Colonic mucosa (tissue), 4 donors: ENCODE measurements at regions of chr2 and their contacts with region 1.

Region 1: DNA sequence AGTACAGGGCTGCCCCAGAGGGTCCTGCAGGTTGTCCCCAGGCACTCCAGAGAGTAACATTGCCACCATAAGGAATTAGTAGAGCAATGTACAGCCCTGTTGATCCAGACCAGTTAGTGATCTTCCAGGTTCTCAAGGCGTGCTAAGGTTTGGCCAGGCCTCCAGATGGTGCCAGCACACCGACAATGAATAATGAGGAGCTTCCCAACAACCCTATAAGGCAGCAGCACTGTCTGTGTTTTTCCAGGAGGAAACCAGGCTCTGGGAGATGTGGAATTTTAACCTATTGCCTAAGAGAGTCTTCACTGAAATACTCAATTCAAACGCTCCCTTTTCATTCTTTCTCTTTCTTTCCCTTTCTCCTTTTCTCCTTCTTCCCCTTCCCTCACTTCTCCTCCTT is 122.1 kb downstream of the MGAT5 start:
- DNase-seq: peak; percentile 43
- H3K4me3 ChIP-seq: no peak overlapping the region
- H3K27ac ChIP-seq: no peak overlapping the region
- H3K4me1 ChIP-seq: peaks cover 5% of the 10 kb centered on the region
- H3K27me3 ChIP-seq: no peaks in the 10 kb centered on the region
- CTCF ChIP-seq: peak; percentile 46

Region 2: DNA sequence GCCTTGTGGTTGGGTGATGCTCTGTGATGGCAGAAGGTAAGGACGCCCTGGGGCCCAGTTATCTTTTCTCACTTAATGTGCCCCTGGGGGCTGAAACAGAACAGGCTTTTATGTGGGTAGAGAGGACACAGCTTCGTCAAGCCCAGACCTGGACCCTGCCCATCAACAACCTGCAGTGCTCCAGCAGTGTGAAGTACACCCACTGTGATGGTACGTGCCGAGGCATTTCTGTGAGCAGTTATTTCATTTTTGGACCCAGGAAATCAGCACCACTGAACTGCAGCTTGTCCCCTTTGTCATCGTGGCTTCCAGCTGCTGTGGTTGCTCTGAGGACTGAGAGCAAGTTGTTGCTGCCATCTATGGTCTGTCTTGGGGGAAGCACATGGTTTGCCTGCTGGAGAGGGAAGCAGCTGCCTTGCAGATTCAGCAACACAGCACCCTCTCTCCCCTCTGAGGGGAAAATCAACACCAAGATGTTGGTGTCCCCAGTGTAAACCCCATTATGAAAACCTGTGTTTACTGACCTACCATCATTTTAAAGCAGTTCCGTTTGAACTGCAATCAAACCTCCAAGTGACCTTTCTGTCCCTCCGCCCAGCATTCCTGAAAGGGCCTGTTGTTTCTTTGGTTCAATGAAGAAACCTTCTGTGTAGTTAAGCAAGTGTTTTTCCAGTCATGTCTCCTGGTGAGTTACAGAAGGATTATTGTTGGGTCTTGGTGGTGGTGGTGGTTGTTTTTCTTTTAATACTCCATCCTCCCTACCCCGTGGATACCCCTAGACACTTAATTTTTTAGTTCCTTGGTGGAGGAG is 36.1 kb after region 1 on chr2:
- intact Hi-C with region 1: loop called (anchors 5 kb)
- DNase-seq: peak; percentile 76
- H3K4me3 ChIP-seq: no peak overlapping the region
- H3K27ac ChIP-seq: no peak overlapping the region
- H3K4me1 ChIP-seq: peaks cover 7% of the 10 kb centered on the region
- H3K27me3 ChIP-seq: no peaks in the 10 kb centered on the region
- CTCF ChIP-seq: peak; percentile 61